Left lung (tissue), 14 donors: ENCODE measurements at regions of chr1 and their contacts with region 1.

Region 1: GRCh38 chr1:26169669-26170471 is at the start of gene ZNF593:
- DNase-seq: peak; percentile 79 to 98 (median 94)
- ATAC-seq: peak; percentile 97
- H3K4me3 ChIP-seq: peak within 1 kb of the TSS; percentile 71 to 81
- H3K27ac ChIP-seq: peak within 1 kb of the TSS; percentile 20 to 80
- H3K4me1 ChIP-seq: peaks cover 5 to 21% of the 10 kb centered on the region in 2 donors
- H3K27me3 ChIP-seq: peaks cover 0 to 9% of the 10 kb centered on the region in 2 donors
- CTCF ChIP-seq: peak; percentile 89 to 91
- polyA plus RNA-seq, gene ZNF593: 8.7 to 18.1 (median 13.7) TPM

Region 2: GRCh38 chr1:26035959-26036755 is 133.7 kb before region 1 on chr1:
- intact Hi-C with region 1: loop called in 1 of 2 experiments (anchors 10 kb)
- DNase-seq: peak; percentile 77 to 97 (median 84)
- ATAC-seq: peak; percentile 97
- H3K4me3 ChIP-seq: peak overlapping the region; percentile 75 to 90
- H3K27ac ChIP-seq: peak overlapping the region; percentile 29 to 65
- H3K4me1 ChIP-seq: peaks cover 0 to 14% of the 10 kb centered on the region in 2 donors
- H3K27me3 ChIP-seq: peaks cover 0 to 44% of the 10 kb centered on the region in 2 donors
- CTCF ChIP-seq: peak; percentile 100